Heart left ventricle (tissue), 16 donors: ENCODE measurements at regions of chr4 and their contacts with region 1.

Region 1: GRCh38 chr4:182806259-182807252 is 110.6 kb downstream of the DCTD start:
- DNase-seq: peak; percentile 61 to 87 (median 79)
- ATAC-seq: peak; percentile 83 to 96 (median 89)
- H3K4me3 ChIP-seq: peak overlapping the region; percentile 27 to 75 (median 59)
- H3K27ac ChIP-seq: peak overlapping the region in 8 of 12 donors; percentile 21 to 62 (median 49)
- H3K4me1 ChIP-seq: peaks cover 0 to 13% (median 6%) of the 10 kb centered on the region in 12 donors
- H3K27me3 ChIP-seq: peaks cover 0 to 7% (median 0%) of the 10 kb centered on the region in 9 donors
- CTCF ChIP-seq: peak; percentile 75 to 96 (median 90)
- POLR2A ChIP-seq: no peak

Region 2: GRCh38 chr4:181143250-181143854 is 1663.2 kb before region 1 on chr4:
- intact Hi-C with region 1: loop called in 4 of 10 experiments (anchors 5 to 10 kb)
- DNase-seq: peak; percentile 47 to 80 (median 67)
- ATAC-seq: peak in 3 of 4 donors; percentile 32 to 65 (median 60)
- H3K4me3 ChIP-seq: no peak overlapping the region
- H3K27ac ChIP-seq: no peak overlapping the region
- H3K4me1 ChIP-seq: no peaks in the 10 kb centered on the region
- H3K27me3 ChIP-seq: peaks cover 0 to 15% (median 0%) of the 10 kb centered on the region in 9 donors
- CTCF ChIP-seq: peak; percentile 82 to 95 (median 90)
- POLR2A ChIP-seq: no peak

Region 3: DNA sequence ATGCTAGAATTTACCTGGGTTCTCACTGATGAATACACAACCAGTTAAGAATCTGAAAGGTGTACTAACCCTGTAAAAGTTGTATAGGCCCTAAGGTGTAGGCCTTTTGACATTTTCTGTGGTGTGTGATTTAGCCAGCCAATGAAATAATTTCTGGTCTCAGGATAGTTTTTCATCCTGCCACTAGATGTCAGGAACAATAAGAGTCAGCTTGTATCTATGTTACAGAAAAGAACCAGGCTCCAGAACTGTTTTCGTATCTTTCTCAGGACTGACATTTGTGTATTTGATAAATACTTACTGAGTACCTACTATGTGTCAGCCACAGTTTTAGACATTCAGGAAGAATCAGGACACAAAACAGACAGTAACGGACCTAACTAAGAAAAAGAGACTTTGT is 1237.0 kb before region 1 on chr4:
- intact Hi-C with region 1: loop called in 2 of 10 experiments (anchors 10 kb)
- DNase-seq: no peak
- ATAC-seq: peak in 3 of 4 donors; percentile 39 to 64 (median 56)
- H3K4me3 ChIP-seq: no peak overlapping the region
- H3K27ac ChIP-seq: no peak overlapping the region
- H3K4me1 ChIP-seq: no peaks in the 10 kb centered on the region
- H3K27me3 ChIP-seq: no peaks in the 10 kb centered on the region
- CTCF ChIP-seq: peak in 11 of 12 donors; percentile 13 to 56 (median 43)
- POLR2A ChIP-seq: no peak

Region 4: DNA sequence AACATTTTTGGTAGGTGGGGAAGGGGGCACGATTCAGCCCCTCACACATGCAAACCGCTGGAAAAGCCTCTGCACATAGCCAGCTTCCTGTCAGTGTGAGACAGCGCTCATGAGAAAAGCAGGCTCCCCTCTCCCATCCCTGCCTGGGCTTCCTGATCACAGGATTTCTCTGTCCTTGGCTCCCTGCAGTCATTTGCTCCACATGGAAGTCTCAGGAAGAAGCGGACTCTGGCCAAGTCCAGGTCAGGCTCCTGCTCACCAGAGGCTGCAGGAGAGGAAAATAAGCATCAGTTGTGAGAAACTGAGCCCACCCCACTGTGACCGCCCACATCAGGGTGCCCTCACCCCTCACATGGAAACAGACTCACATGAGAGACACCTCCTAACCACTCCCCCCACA is 1227.6 kb before region 1 on chr4:
- intact Hi-C with region 1: loop called in 1 of 10 experiments (anchors 10 kb)
- DNase-seq: no peak
- ATAC-seq: no peak
- H3K4me3 ChIP-seq: no peak overlapping the region
- H3K27ac ChIP-seq: no peak overlapping the region
- H3K4me1 ChIP-seq: no peaks in the 10 kb centered on the region
- H3K27me3 ChIP-seq: no peaks in the 10 kb centered on the region
- CTCF ChIP-seq: no peak
- POLR2A ChIP-seq: no peak

Region 5: GRCh38 chr4:182478475-182478874 is 328.1 kb before region 1 on chr4:
- intact Hi-C with region 1: loop called (anchors 1 to 5 kb)
- DNase-seq: no peak
- ATAC-seq: peak in 1 of 4 donors; percentile 39
- H3K4me3 ChIP-seq: no peak overlapping the region
- H3K27ac ChIP-seq: no peak overlapping the region
- H3K4me1 ChIP-seq: no peaks in the 10 kb centered on the region
- H3K27me3 ChIP-seq: no peaks in the 10 kb centered on the region
- CTCF ChIP-seq: peak; percentile 46 to 79 (median 67)
- POLR2A ChIP-seq: no peak

Region 6: GRCh38 chr4:182486881-182487280 is 319.7 kb before region 1 on chr4:
- intact Hi-C with region 1: loop called in 1 of 10 experiments (anchors 5 kb)
- DNase-seq: no peak
- ATAC-seq: no peak
- H3K4me3 ChIP-seq: no peak overlapping the region
- H3K27ac ChIP-seq: no peak overlapping the region
- H3K4me1 ChIP-seq: peaks cover 0 to 3% (median 0%) of the 10 kb centered on the region in 12 donors
- H3K27me3 ChIP-seq: no peaks in the 10 kb centered on the region
- CTCF ChIP-seq: no peak
- POLR2A ChIP-seq: no peak

Region 7: GRCh38 chr4:182680234-182680653 is 126.3 kb before region 1 on chr4:
- intact Hi-C with region 1: no loop called
- DNase-seq: peak; percentile 36 to 73 (median 60)
- ATAC-seq: peak; percentile 88 to 93 (median 90)
- H3K4me3 ChIP-seq: peak overlapping the region in 6 of 12 donors; percentile 13 to 40 (median 22)
- H3K27ac ChIP-seq: peak overlapping the region in 3 of 12 donors; percentile 5 to 36 (median 14)
- H3K4me1 ChIP-seq: peaks cover 0 to 18% (median 5%) of the 10 kb centered on the region in 12 donors
- H3K27me3 ChIP-seq: no peaks in the 10 kb centered on the region
- CTCF ChIP-seq: no peak
- POLR2A ChIP-seq: no peak